Activated naive CD4-positive, alpha-beta T cell treated with anti-CD3 and anti-CD28 coated beads for 36 hours (primary cell): ENCODE measurements at regions of chr16 and their contacts with region 1.

Region 1: DNA sequence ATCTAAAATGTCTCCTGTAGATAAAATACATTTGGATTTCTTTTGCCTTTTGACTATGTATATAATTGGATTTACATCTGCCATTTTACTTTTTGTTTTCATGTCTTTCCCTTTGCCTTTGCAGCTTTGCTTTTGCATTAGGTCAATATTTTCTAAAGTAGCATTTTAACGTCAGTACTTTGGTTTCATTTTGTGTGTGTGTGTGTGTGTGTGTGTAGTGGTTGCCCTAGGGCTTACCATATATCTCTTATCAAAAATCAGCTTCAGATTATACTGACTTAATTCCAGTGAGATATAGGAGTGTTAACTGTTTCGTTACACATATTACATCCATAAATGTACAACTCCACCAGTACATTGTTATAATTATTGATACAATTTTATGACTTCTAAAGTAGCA is 26.1 kb downstream of the AKTIP start:
- DNase-seq: no peak
- H3K4me3 Mint-ChIP-seq: no peak overlapping the region
- H3K27ac Mint-ChIP-seq: peak overlapping the region; percentile 48
- H3K4me1 Mint-ChIP-seq: peaks cover 36% of the 10 kb centered on the region
- H3K27me3 Mint-ChIP-seq: no peaks in the 10 kb centered on the region

Region 2: GRCh38 chr16:53429221-53429943 is 47.5 kb before region 1 on chr16:
- CTCF ChIA-PET with region 1: no interaction called
- intact Hi-C with region 1: no loop called
- DNase-seq: no peak
- H3K4me3 Mint-ChIP-seq: no peak overlapping the region
- H3K27ac Mint-ChIP-seq: no peak overlapping the region
- H3K4me1 Mint-ChIP-seq: peaks cover 8% of the 10 kb centered on the region
- H3K27me3 Mint-ChIP-seq: no peaks in the 10 kb centered on the region

Region 3: GRCh38 chr16:53457670-53458069 is 19.2 kb before region 1 on chr16:
- CTCF ChIA-PET with region 1: no interaction called
- intact Hi-C with region 1: loop called (anchors 2 kb)
- DNase-seq: peak; percentile 87
- H3K4me3 Mint-ChIP-seq: peak overlapping the region; percentile 57
- H3K27ac Mint-ChIP-seq: peak overlapping the region; percentile 94
- H3K4me1 Mint-ChIP-seq: peaks cover 86% of the 10 kb centered on the region
- H3K27me3 Mint-ChIP-seq: no peaks in the 10 kb centered on the region

Region 4: GRCh38 chr16:53991754-53992378 is 515.0 kb after region 1 on chr16:
- CTCF ChIA-PET with region 1: no interaction called
- intact Hi-C with region 1: no loop called
- DNase-seq: no peak
- H3K4me3 Mint-ChIP-seq: no peak overlapping the region
- H3K27ac Mint-ChIP-seq: no peak overlapping the region
- H3K4me1 Mint-ChIP-seq: peaks cover 6% of the 10 kb centered on the region
- H3K27me3 Mint-ChIP-seq: no peaks in the 10 kb centered on the region